Natural killer cell (primary cell): ENCODE measurements at regions of chr11 and their contacts with region 1.

Region 1: GRCh38 chr11:18634140-18635032 is at the start of gene SPTY2D1:
- DNase-seq: peak; percentile 93 to 99
- ATAC-seq: peak; percentile 93 to 97 (median 94)
- H3K4me3 ChIP-seq: peak within 1 kb of the TSS; percentile 94
- H3K4me3 Mint-ChIP-seq: peak within 1 kb of the TSS; percentile 93
- H3K27ac ChIP-seq: peak within 1 kb of the TSS; percentile 99
- H3K27ac Mint-ChIP-seq: peak within 1 kb of the TSS; percentile 98 to 99
- H3K4me1 ChIP-seq: peaks cover 13% of the 10 kb centered on the region
- H3K4me1 Mint-ChIP-seq: peaks cover 28 to 34% of the 10 kb centered on the region in 2 donors
- H3K27me3 ChIP-seq: no peaks in the 10 kb centered on the region
- H3K27me3 Mint-ChIP-seq: no peaks in the 10 kb centered on the region
- CTCF ChIP-seq: no peak
- total RNA-seq, gene SPTY2D1: 58.6 to 62.5 (median 62.0) TPM

Region 2: GRCh38 chr11:18321980-18322711 is 312.2 kb before region 1 on chr11 and contains the starts of genes GTF2H1 and HPS5:
- intact Hi-C with region 1: loop called (anchors 1 kb)
- DNase-seq: peak; percentile 96 to 100
- ATAC-seq: peak; percentile 82 to 94 (median 87)
- H3K4me3 ChIP-seq: peak within 1 kb of the TSS; percentile 94
- H3K4me3 Mint-ChIP-seq: peak within 1 kb of the TSS; percentile 96
- H3K27ac ChIP-seq: peak within 1 kb of the TSS; percentile 99
- H3K27ac Mint-ChIP-seq: peak within 1 kb of the TSS; percentile 99 to 100
- H3K4me1 ChIP-seq: peaks cover 16% of the 10 kb centered on the region
- H3K4me1 Mint-ChIP-seq: peaks cover 51 to 58% of the 10 kb centered on the region in 2 donors
- H3K27me3 ChIP-seq: no peaks in the 10 kb centered on the region
- H3K27me3 Mint-ChIP-seq: no peaks in the 10 kb centered on the region
- CTCF ChIP-seq: no peak
- total RNA-seq, gene GTF2H1: 18.4 to 31.5 (median 22.4) TPM
- total RNA-seq, gene HPS5: 11.5 to 14.5 (median 14.0) TPM

Region 3: DNA sequence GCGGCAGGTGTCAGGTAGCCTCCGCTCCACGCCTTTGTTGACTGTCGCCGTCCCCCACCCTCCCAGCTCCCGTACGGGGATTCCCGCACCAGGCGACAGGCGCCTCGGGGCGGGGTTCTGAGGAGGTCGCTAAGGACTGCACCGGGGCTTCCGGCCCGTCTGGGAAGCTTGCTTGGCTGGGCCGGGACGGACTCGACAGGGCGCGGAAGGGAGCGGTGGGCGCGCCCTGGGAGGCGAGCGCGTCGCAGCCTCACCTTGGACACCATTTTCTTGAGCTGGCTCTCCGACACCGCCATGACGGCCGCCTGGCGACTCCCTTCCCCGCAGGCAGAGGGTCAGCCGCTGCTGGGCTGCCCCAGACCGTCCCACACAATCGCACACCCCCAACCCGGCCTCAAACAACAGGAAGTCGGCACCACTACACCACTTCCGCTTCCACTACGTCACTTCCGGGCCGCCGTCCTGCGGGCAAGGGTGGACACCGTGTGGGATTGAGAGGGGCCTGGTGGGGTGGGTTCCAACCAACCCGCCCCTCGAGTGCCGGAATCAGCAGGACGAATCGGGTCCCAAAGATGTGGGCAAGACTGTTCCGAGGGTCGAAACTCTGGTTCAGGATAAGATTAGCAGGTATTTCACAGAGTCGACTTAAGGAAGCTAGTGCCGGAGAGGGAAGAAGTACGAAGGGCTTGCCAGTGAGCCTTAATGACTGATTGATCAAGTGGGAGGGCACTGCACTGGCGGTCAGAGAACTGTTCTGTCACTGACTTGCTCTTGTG is 107.7 kb before region 1 on chr11 and contains the start of gene TSG101:
- intact Hi-C with region 1: loop called (anchors 1 kb)
- DNase-seq: peak; percentile 95
- ATAC-seq: peak; percentile 78 to 94 (median 83)
- H3K4me3 ChIP-seq: peak within 1 kb of the TSS; percentile 54
- H3K4me3 Mint-ChIP-seq: peak within 1 kb of the TSS; percentile 99
- H3K27ac ChIP-seq: peak within 1 kb of the TSS; percentile 93
- H3K27ac Mint-ChIP-seq: peak within 1 kb of the TSS; percentile 100
- H3K4me1 ChIP-seq: peaks cover 16% of the 10 kb centered on the region
- H3K4me1 Mint-ChIP-seq: peaks cover 43 to 45% of the 10 kb centered on the region in 2 donors
- H3K27me3 ChIP-seq: no peaks in the 10 kb centered on the region
- H3K27me3 Mint-ChIP-seq: no peaks in the 10 kb centered on the region
- CTCF ChIP-seq: no peak
- total RNA-seq, gene TSG101: 22.7 to 35.2 (median 23.0) TPM

Region 4: DNA sequence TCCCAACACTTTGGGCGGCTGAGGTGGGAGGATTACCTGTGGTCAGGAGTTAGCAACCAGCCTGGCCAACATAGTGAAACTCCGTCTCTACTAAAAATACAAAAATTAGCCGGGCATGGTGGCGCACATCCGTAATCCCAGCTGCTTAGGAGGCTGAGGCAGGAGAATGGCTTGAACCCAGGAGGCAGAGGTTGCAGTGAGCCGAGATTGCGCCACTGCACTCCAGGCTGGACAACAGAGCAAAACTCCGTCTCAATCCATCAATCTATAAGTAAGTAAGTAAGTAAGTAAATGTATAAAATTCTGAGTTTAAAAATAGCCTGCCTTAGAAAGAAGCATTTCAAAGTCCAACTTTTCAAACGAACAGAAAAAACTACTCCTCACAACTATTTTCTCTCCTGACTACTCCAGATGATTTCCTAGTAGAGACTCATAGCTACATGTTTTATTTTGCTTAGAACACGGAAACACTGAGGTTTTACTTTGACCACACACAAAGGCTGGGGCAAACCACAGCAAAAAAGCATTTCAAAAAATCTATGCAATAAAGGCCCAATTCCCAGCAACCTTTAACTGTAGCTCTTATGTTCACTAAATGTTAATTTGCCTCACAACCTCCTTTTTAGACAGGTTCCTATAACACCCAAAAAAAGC is 16.6 kb before region 1 on chr11:
- intact Hi-C with region 1: loop called (anchors 1 kb)
- DNase-seq: peak in 1 of 2 donors; percentile 71
- ATAC-seq: peak; percentile 52 to 82 (median 75)
- H3K4me3 ChIP-seq: peak overlapping the region; percentile 22
- H3K4me3 Mint-ChIP-seq: peak overlapping the region; percentile 90
- H3K27ac ChIP-seq: peak overlapping the region; percentile 69
- H3K27ac Mint-ChIP-seq: peak overlapping the region; percentile 81 to 90
- H3K4me1 ChIP-seq: peaks cover 16% of the 10 kb centered on the region
- H3K4me1 Mint-ChIP-seq: peaks cover 40 to 53% of the 10 kb centered on the region in 2 donors
- H3K27me3 ChIP-seq: no peaks in the 10 kb centered on the region
- H3K27me3 Mint-ChIP-seq: no peaks in the 10 kb centered on the region
- CTCF ChIP-seq: no peak

Region 5: GRCh38 chr11:18650859-18651557 is 16.6 kb after region 1 on chr11:
- intact Hi-C with region 1: no loop called
- DNase-seq: peak in 1 of 2 donors; percentile 73
- ATAC-seq: peak; percentile 57 to 64 (median 58)
- H3K4me3 ChIP-seq: no peak overlapping the region
- H3K4me3 Mint-ChIP-seq: no peak overlapping the region
- H3K27ac ChIP-seq: no peak overlapping the region
- H3K27ac Mint-ChIP-seq: no peak overlapping the region
- H3K4me1 ChIP-seq: no peaks in the 10 kb centered on the region
- H3K4me1 Mint-ChIP-seq: no peaks in the 10 kb centered on the region
- H3K27me3 ChIP-seq: no peaks in the 10 kb centered on the region
- H3K27me3 Mint-ChIP-seq: no peaks in the 10 kb centered on the region
- CTCF ChIP-seq: peak; percentile 34

Region 6: GRCh38 chr11:18721561-18722292 is 87.3 kb after region 1 on chr11:
- intact Hi-C with region 1: loop called (anchors 10 kb)
- DNase-seq: peak; percentile 35 to 77
- ATAC-seq: peak; percentile 60 to 75 (median 64)
- H3K4me3 ChIP-seq: peak overlapping the region; percentile 77
- H3K4me3 Mint-ChIP-seq: peak overlapping the region; percentile 95
- H3K27ac ChIP-seq: peak overlapping the region; percentile 16
- H3K27ac Mint-ChIP-seq: peak overlapping the region in 1 of 2 donors; percentile 84
- H3K4me1 ChIP-seq: peaks cover 18% of the 10 kb centered on the region
- H3K4me1 Mint-ChIP-seq: peaks cover 5 to 23% of the 10 kb centered on the region in 2 donors
- H3K27me3 ChIP-seq: no peaks in the 10 kb centered on the region
- H3K27me3 Mint-ChIP-seq: peaks cover 3 to 7% of the 10 kb centered on the region in 2 donors
- CTCF ChIP-seq: peak; percentile 72